Left cardiac atrium (tissue), 4 donors: ENCODE measurements at regions of chr20 and their contacts with region 1.

Region 1: DNA sequence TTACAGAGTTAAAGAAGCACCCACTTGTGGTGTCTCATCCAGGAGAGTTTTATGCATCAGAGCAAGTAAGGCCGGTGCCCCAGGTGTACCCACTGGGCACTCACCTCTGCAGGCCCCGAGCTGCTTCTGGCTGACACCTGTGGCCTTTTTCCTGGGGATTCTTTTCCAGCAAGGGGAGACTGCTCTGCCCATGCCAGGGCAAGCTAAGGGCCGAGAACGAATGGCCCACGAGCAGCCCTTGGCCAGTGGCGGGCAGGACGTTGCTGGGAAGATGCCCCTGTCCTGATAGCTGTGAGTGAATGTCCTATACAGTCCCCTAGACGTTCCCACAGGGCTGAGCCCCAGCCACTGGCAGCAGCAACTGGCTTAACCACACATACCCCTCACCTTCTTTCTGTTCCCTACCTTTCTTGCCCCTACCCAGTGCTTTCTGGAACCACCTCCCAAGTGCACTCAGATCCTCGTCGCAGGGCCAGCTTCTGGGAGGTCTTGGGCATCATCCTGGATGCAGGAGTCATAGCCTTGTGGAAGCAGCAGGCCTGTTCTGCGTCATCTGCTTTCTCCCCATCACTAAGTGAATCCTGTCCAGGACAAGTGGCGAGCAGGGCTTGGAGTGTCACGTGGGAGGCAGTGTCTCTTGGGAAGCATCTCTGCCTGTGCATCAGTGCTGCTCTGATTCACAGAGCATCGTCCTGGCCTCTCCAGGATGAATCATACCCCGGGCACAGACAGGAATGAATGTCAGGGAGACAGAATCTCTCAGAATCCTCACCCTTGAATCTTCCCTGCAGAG is 32.5 kb downstream of the SYNDIG1 start:
- DNase-seq: peak; percentile 71
- ATAC-seq: peak; percentile 27 to 84

Region 2: DNA sequence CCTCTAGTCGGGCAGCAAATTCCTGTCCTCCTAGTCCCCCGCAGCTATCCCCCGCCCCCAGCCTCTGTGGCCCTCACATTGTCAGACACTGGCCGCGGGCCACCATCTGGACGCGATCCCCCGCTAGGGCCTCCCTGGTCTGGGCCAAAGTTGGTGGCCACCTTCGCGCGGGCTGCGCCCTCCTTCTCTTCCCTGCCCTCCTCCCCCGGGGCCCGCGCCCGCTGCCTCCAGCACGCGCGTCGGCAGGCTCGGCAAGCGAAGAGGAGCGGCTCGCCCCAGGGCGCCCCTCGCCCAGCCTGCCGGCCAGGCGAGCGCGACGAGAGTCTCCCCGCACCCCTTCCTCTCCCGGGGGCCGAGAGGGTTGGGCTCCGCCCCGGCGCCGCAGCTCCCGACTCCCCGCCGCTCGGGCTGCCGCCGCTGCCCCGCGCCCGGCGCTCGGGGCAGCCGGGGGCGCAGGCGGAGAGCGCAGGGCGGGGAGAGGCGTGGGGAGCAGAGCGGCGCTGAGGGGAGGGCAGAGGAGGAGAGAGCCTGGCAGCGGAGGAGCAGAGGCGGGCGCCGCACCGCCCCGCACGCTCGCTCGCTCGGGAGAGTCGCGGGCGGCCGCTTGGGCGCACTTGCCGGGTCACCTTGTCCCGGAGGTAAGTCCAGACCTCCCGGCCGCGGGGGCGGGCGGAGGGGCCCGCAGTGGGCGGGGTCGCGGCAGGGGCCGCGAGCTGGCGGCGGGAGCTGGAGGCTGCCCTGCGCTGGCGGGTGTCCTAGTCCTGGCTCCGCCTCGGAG is 32.7 kb before region 1 on chr20 and contains the start of gene SYNDIG1:
- intact Hi-C with region 1: loop called in 1 of 2 experiments (anchors 5 kb)
- DNase-seq: peak; percentile 52
- ATAC-seq: peak; percentile 68 to 70
- total RNA-seq, gene SYNDIG1: 16.7 to 28.4 TPM

Region 3: GRCh38 chr20:24610341-24611115 is 108.6 kb after region 1 on chr20:
- intact Hi-C with region 1: loop called in 1 of 2 experiments (anchors 5 kb)
- DNase-seq: no peak
- ATAC-seq: no peak

Region 4: DNA sequence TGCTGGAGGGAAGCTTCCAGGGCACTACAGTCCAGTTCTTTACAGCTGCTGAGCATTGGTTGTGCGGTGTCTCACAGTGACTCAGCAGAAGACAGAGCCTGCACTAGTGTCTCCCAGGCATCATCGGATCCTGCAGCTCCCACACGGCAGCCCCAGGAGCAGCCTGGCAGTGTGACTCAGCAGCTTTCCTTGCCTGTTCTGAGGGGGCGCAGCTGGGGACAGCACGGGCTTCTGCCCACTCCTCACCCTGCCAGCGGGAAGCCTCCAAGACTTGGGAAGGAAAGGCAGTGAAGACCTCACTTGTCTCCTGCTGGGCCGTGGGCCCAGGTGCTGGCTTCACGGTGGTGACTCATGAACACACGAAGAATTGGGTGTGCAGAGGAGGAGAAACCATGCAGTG is 132.9 kb after region 1 on chr20:
- intact Hi-C with region 1: loop called in 1 of 2 experiments (anchors 5 kb)
- DNase-seq: peak; percentile 44
- ATAC-seq: peak; percentile 70 to 90

Region 5: GRCh38 chr20:24781422-24781980 is 279.5 kb after region 1 on chr20:
- intact Hi-C with region 1: no loop called
- DNase-seq: no peak
- ATAC-seq: peak; percentile 73 to 79